Testis (tissue), 5 donors: ENCODE measurements at regions of chr4 and their contacts with region 1.

Region 1: GRCh38 chr4:82739316-82740179 is 59.0 kb downstream of the SCD5 start:
- DNase-seq: peak; percentile 64
- H3K4me3 ChIP-seq: no peak overlapping the region
- H3K27ac ChIP-seq: no peak overlapping the region
- H3K4me1 ChIP-seq: peaks cover under 1% of the 10 kb centered on the region
- H3K27me3 ChIP-seq: no peaks in the 10 kb centered on the region
- CTCF ChIP-seq: peak; percentile 77 to 90 (median 80)
- POLR2A ChIP-seq: no peak

Region 2: GRCh38 chr4:82462415-82462831 is 277.1 kb before region 1 on chr4:
- intact Hi-C with region 1: loop called (anchors 10 kb)
- DNase-seq: peak; percentile 96
- H3K4me3 ChIP-seq: no peak overlapping the region
- H3K27ac ChIP-seq: no peak overlapping the region
- H3K4me1 ChIP-seq: no peaks in the 10 kb centered on the region
- H3K27me3 ChIP-seq: no peaks in the 10 kb centered on the region
- CTCF ChIP-seq: peak; percentile 53 to 89 (median 78)
- POLR2A ChIP-seq: no peak

Region 3: DNA sequence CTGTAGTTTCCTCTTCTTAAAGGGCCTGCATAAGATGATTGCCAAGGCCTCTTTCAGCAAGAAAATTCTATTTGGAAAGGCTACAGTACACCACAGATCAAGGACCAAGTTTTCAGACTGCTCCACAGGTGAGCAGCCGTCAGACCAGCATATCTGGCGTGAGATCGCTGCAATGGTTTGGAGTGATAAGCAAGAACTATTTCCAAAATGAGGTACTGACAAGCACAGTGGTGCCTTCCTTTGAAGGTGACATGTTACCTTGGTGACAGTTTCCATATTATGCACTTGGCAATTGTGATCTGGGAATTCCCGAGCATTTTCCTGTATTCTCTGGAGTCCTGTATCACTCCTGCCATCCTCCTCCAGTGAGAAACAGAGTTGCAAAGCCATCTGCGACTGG is 170.5 kb before region 1 on chr4:
- intact Hi-C with region 1: no loop called
- DNase-seq: no peak
- H3K4me3 ChIP-seq: no peak overlapping the region
- H3K27ac ChIP-seq: no peak overlapping the region
- H3K4me1 ChIP-seq: no peaks in the 10 kb centered on the region
- H3K27me3 ChIP-seq: no peaks in the 10 kb centered on the region
- CTCF ChIP-seq: no peak
- POLR2A ChIP-seq: no peak

Region 4: DNA sequence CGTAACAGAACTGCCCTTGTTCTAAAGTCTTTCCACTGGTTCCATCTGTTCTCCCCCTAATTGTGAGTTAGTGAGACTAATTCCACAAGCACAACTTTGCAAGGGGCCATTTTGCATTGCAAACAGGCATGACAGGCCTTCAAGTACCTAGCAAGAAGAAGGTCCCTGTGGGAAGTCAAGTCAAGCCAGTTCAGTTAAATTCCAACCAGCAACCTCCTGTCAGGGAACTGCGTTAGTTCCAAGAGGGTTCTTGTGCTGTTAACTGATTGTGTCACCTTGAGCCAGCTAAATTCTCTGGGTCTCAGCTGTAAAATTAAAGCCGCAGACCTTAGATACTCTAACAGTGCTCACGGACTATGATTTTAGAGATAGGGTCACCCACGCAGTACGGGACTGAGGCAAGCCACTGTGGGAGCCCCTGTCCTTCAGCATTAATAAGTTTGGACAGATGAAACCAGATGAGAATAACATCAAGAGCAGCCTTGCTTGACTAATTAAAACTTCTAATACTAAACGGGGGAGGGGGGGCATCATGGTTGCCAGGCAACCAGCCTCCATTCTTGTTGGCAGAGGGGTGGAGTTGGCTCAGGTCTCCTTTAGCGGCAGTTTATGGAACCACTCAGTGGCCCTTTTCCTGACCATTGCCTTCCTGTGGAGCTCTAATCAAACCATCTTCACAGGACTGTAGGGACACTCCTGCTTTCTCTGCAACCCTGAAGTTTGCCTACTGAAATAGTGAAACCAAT is 153.7 kb before region 1 on chr4:
- intact Hi-C with region 1: no loop called
- DNase-seq: no peak
- H3K4me3 ChIP-seq: no peak overlapping the region
- H3K27ac ChIP-seq: no peak overlapping the region
- H3K4me1 ChIP-seq: no peaks in the 10 kb centered on the region
- H3K27me3 ChIP-seq: no peaks in the 10 kb centered on the region
- CTCF ChIP-seq: no peak
- POLR2A ChIP-seq: no peak